ENCODE measurements at regions of chr6 and their contacts with region 1.

Region 1: GRCh38 chr6:33248925-33249731 is 22.5 kb downstream of the VPS52 start:
- DNase-seq: peak; percentile 86
- ATAC-seq: peak; percentile 84
- H3K4me3 Mint-ChIP-seq: peak overlapping the region; percentile 91
- H3K27ac Mint-ChIP-seq: peak overlapping the region; percentile 91
- H3K4me1 Mint-ChIP-seq: peaks cover 28% of the 10 kb centered on the region
- H3K27me3 Mint-ChIP-seq: no peaks in the 10 kb centered on the region
- CTCF ChIP-seq: no peak

Region 2: GRCh38 chr6:33000055-33000454 is 249.1 kb before region 1 on chr6:
- CTCF ChIA-PET with region 1: interaction called, 19 read pairs
- POLR2A ChIA-PET with region 1: interaction called, 14 read pairs
- intact Hi-C with region 1: loop called (anchors 1 kb)
- DNase-seq: no peak
- ATAC-seq: peak; percentile 92
- H3K4me3 Mint-ChIP-seq: peak overlapping the region; percentile 47
- H3K27ac Mint-ChIP-seq: peak overlapping the region; percentile 79
- H3K4me1 Mint-ChIP-seq: peaks cover 12% of the 10 kb centered on the region
- H3K27me3 Mint-ChIP-seq: no peaks in the 10 kb centered on the region
- CTCF ChIP-seq: no peak

Region 3: GRCh38 chr6:33082702-33083101 is 166.4 kb before region 1 on chr6:
- CTCF ChIA-PET with region 1: interaction called, 4 read pairs
- POLR2A ChIA-PET with region 1: interaction called, 27 read pairs
- intact Hi-C with region 1: loop called (anchors 1 kb)
- DNase-seq: no peak
- ATAC-seq: peak; percentile 54
- H3K4me3 Mint-ChIP-seq: peak overlapping the region; percentile 89
- H3K27ac Mint-ChIP-seq: peak overlapping the region; percentile 78
- H3K4me1 Mint-ChIP-seq: peaks cover 74% of the 10 kb centered on the region
- H3K27me3 Mint-ChIP-seq: no peaks in the 10 kb centered on the region
- CTCF ChIP-seq: no peak

Region 4: GRCh38 chr6:33147807-33148666 is 101.1 kb before region 1 on chr6:
- CTCF ChIA-PET with region 1: interaction called, 19 read pairs
- POLR2A ChIA-PET with region 1: interaction called, 3 read pairs
- intact Hi-C with region 1: loop called (anchors 1 kb)
- DNase-seq: no peak
- ATAC-seq: no peak
- H3K4me3 Mint-ChIP-seq: no peak overlapping the region
- H3K27ac Mint-ChIP-seq: no peak overlapping the region
- H3K4me1 Mint-ChIP-seq: peaks cover 14% of the 10 kb centered on the region
- H3K27me3 Mint-ChIP-seq: peaks cover 6% of the 10 kb centered on the region
- CTCF ChIP-seq: peak; percentile 29

Region 5: GRCh38 chr6:33208091-33208967 is 40.8 kb before region 1 on chr6 and contains the start of gene RING1:
- CTCF ChIA-PET with region 1: interaction called, 8 read pairs
- POLR2A ChIA-PET with region 1: interaction called, 37 read pairs
- intact Hi-C with region 1: no loop called
- DNase-seq: peak; percentile 88
- ATAC-seq: peak; percentile 51
- H3K4me3 Mint-ChIP-seq: peak within 1 kb of the TSS; percentile 87
- H3K27ac Mint-ChIP-seq: peak within 1 kb of the TSS; percentile 82
- H3K4me1 Mint-ChIP-seq: peaks cover 45% of the 10 kb centered on the region
- H3K27me3 Mint-ChIP-seq: peaks cover 13% of the 10 kb centered on the region
- CTCF ChIP-seq: no peak
- total RNA-seq, gene RING1: 41.7 and 43.8 TPM in 2 replicates

Region 6: DNA sequence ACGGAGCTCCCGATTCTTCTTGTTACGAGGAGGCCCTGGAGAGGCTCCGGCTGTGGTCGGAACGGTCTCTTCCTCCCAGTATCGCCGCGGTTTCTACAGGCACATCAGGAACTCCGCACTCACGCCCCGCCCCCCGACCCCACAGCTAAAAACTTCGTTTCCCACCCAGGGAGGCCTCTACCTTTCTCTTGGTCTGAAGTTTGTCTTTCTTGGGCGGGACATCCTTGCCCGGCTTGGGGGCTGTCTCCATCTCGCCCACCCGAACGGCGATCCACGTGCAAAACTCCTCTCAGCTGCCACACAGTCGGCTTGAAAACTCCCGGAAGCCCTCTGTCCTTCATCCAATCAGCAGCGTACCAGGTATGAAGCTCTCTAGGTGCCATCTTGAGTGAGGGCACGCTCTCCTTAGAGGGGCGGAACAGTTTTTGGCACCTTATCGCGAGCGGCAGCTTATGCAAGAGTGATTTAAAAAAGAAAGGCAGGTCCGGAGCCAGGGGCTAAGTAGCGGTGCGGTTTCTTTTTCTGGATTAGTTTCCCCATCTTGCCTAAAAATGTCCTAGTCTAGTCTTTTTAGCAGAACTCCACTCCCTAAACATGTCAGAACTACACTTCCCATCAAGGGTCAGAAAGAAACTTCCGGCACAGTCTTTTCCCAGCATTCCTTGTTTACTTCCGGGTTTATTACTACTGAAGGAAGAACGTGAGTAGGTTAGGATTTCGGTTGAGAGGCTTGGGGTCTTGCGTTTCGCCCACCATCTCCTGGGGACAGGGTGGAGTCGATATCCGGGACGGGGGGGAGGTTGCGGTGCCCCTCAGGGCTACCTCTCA is 40.0 kb after region 1 on chr6 and contains the starts of genes PFDN6 and WDR46:
- CTCF ChIA-PET with region 1: no interaction called
- POLR2A ChIA-PET with region 1: interaction called, 14 read pairs
- intact Hi-C with region 1: loop called (anchors 2 kb)
- DNase-seq: peak; percentile 66
- ATAC-seq: peak; percentile 94
- H3K4me3 Mint-ChIP-seq: peak within 1 kb of the TSS; percentile 100
- H3K27ac Mint-ChIP-seq: peak within 1 kb of the TSS; percentile 95
- H3K4me1 Mint-ChIP-seq: peaks cover 48% of the 10 kb centered on the region
- H3K27me3 Mint-ChIP-seq: no peaks in the 10 kb centered on the region
- CTCF ChIP-seq: no peak
- total RNA-seq, gene PFDN6: 82.8 and 95.1 TPM in 2 replicates
- total RNA-seq, gene WDR46: 114 and 117 TPM in 2 replicates

Region 7: GRCh38 chr6:33410050-33410710 is 161.1 kb after region 1 on chr6:
- CTCF ChIA-PET with region 1: no interaction called
- POLR2A ChIA-PET with region 1: interaction called, 8 read pairs
- intact Hi-C with region 1: loop called (anchors 1 kb)
- DNase-seq: peak; percentile 93
- ATAC-seq: peak; percentile 74
- H3K4me3 Mint-ChIP-seq: peak overlapping the region; percentile 88
- H3K27ac Mint-ChIP-seq: peak overlapping the region; percentile 87
- H3K4me1 Mint-ChIP-seq: peaks cover 47% of the 10 kb centered on the region
- H3K27me3 Mint-ChIP-seq: no peaks in the 10 kb centered on the region
- CTCF ChIP-seq: no peak